GM18951 (cell line): ENCODE measurements at regions of chrX and their contacts with region 1.

Region 1: DNA sequence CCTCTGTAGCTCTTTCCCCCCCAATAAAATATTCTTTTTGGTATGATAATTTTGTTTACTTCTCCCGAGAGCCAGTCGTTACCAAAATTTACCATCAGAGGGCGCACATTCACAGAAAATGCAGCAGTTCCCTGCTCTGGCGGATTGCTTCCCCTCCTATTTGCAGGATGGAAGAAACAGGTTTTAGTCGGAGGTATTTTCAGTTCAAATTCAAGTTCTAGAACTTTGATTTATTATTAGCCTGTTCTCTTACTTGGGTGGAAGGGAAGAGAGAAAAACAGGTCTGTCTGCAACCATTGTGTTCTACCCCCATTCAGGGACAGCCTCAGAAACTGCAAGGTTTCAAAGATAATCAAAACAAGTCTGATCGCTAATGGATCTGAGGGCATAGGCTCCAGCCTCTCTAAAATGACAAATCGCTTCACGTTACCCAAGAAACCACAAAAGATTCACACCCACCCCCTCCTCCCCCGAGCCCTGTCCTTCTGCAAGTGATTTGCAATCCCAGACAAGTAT is 263.8 kb upstream of the RPS6KA3 start:
- POLR2A ChIP-seq: no peak

Region 2: DNA sequence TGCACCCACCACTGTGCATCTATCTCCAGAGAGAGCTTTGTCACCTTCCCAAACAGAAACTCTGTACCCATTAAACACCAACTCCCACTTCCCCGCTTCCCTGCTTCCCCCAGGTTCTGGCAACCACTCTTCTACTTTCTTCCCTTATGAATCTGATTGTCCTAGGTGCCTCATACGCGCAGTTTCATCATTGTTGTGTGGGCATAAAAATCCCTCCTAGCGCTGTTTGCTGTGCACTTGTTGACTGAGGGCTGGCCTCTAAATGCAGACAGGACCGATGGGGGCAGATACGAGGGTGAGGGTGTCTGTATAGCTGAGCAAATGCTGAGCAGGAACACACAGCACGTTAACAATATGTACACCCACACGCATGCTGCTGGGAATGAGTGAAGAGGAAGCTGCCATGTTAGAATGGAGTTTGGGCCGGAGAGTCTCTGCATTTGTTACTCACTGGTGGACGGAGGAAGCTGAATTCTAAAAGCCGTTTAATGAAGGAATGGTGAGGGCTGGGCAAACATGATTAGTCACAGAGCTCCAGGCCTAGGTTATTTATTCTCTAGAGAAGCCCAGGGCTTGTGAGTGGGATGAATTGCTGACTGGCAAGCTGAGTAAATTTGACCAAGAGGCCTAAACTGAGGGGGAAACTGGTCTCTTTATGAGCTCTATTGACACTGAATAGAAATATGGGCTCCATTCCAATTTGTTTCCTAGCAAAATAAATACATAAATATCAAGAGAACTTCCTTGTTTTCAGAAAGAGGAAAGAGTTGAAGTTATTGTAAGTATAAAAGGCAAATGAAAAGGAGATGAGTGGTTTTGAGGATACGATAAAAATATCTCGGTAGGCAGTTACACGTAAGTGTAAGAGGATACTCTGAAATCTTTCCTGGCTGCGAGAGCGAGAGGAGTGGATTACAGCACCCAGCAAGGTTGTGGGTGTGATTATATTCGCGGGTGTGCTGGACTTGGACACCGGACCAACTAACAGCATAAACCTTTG is 167.9 kb before region 1 on chrX:
- in situ Hi-C with region 1: no loop called
- POLR2A ChIP-seq: no peak

Region 3: DNA sequence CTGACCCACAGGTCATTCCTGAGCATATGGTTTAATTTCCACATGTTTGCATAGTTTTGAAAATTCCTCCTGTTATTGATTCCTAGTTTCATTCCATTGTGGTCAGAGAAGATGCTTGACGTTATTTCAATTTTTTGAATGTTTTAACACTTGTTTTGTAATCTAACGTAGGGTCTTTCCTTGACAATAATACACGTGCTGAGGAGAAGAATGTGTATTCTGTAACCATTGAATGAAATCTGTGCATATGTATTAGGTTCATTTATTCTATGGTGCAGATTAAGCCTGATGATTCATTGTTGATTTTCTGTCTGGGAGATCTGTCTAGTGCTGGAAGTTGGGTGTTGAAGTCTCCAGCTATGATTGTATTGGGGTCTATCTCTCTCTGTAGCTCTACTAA is 222.6 kb after region 1 on chrX:
- in situ Hi-C with region 1: no loop called
- POLR2A ChIP-seq: no peak

Region 4: DNA sequence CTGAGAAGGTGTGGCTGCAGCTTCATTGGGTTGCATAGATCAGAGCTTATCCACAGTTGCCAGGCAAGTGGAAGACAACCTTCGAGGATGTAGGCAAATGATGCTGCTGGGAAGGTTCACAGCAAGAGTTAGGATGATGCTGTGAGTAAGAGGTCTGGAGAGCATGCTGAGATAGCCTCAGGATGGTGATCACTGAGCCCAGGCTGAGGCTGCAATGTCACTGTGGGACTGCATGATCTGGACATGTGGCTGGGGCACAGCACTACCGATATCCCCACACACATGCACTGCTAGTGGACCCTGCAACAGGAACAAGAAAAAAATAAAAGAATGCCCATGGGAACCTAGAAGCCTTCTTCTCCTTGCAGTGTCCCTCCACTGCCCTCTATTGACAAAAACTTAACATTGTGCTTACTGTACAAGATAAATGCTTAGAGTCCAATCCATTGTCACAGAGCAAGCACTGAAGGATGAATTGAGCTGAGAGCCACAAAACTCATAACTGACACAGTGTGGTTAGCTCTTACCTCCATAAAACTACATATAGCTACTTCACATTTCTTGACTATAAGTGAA is 949.3 kb after region 1 on chrX:
- in situ Hi-C with region 1: loop called (anchors 10 kb)
- POLR2A ChIP-seq: no peak

Region 5: DNA sequence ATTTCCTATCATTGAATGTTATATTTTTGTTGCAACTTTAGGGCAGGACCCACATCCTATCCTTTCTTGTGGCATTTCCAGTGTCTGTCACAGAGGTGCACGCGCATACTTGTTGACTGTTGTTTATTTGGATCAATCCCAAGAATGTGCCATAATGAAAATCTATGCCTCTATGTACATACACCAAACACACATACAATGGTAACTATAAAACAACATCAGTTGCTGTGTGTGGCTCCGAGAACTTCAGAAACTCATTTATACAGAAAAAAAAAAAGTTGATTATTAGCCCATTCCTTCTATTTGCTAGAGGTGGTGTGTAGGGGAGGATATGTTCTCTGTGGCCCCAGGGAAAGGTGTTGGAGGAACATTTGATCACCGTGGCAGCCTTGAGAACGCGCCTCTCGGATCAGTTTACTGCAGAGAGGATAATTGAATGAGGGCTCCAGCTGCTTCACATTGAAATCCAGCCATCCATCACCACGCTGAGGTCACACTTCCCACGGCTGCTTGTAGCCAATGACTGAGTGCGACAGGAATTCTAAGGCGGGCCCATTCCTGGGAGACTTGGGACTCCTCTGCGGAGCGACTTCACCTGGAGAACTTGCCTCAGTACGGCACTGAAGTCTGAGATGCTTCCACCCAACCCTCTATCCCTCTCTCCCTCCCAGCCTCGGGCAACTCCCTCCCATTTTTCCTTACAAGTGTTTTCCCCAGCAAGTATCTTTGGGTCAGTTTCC is 1207.9 kb after region 1 on chrX:
- in situ Hi-C with region 1: loop called (anchors 10 kb)
- POLR2A ChIP-seq: no peak